ENCODE measurements at regions of chr19 and their contacts with region 1.

Region 1: GRCh38 chr19:14405758-14406644 is 13.1 kb downstream of the DDX39A start:
- DNase-seq: peak; percentile 48
- ATAC-seq: peak; percentile 86
- H3K4me3 ChIP-seq: no peak overlapping the region
- H3K27ac ChIP-seq: no peak overlapping the region
- H3K4me1 ChIP-seq: peaks cover 3% of the 10 kb centered on the region; the same call in 1 of the 2 replicates
- H3K27me3 ChIP-seq: no peaks in the 10 kb centered on the region
- CTCF ChIP-seq: peak; percentile 66 to 94 (median 89)
- EP300 ChIP-seq: no peak
- POLR2A ChIP-seq: peak; percentile 57
- RAD21 ChIP-seq: peak; percentile 94

Region 2: GRCh38 chr19:14375055-14375581 is 30.9 kb before region 1 on chr19:
- CTCF ChIA-PET with region 1: interaction called, 3 read pairs
- POLR2A ChIA-PET with region 1: interaction called, 3 read pairs
- RAD21 ChIA-PET with region 1: interaction called, 15 read pairs
- SMC1A ChIA-PET with region 1: interaction called, 3 read pairs
- in situ Hi-C with region 1: no loop called
- intact Hi-C with region 1: no loop called
- DNase-seq: no peak
- ATAC-seq: peak; percentile 66
- H3K4me3 ChIP-seq: peak overlapping the region; percentile 27; the same call in 1 of the 2 replicates
- H3K27ac ChIP-seq: peak overlapping the region; percentile 83
- H3K4me1 ChIP-seq: peaks cover 33% of the 10 kb centered on the region
- H3K27me3 ChIP-seq: no peaks in the 10 kb centered on the region
- CTCF ChIP-seq: no peak
- EP300 ChIP-seq: no peak
- POLR2A ChIP-seq: peak; percentile 75
- RAD21 ChIP-seq: no peak

Region 3: GRCh38 chr19:14383661-14384555 is 22.1 kb before region 1 on chr19:
- CTCF ChIA-PET with region 1: interaction called, 25 read pairs
- POLR2A ChIA-PET with region 1: interaction called, 7 read pairs
- RAD21 ChIA-PET with region 1: interaction called, 15 read pairs
- SMC1A ChIA-PET with region 1: interaction called, 4 read pairs
- in situ Hi-C with region 1: no loop called
- intact Hi-C with region 1: no loop called
- DNase-seq: no peak
- ATAC-seq: peak; percentile 60
- H3K4me3 ChIP-seq: peak overlapping the region; percentile 86
- H3K27ac ChIP-seq: peak overlapping the region; percentile 98
- H3K4me1 ChIP-seq: peaks cover 20% of the 10 kb centered on the region
- H3K27me3 ChIP-seq: no peaks in the 10 kb centered on the region
- CTCF ChIP-seq: no peak
- EP300 ChIP-seq: peak; percentile 55 to 70
- POLR2A ChIP-seq: peak; percentile 58; the same call in 1 of the 2 replicates
- RAD21 ChIP-seq: no peak

Measured in GM12878 (cell line).